ENCODE measurements at regions of chr13 and their contacts with region 1.

Region 1: DNA sequence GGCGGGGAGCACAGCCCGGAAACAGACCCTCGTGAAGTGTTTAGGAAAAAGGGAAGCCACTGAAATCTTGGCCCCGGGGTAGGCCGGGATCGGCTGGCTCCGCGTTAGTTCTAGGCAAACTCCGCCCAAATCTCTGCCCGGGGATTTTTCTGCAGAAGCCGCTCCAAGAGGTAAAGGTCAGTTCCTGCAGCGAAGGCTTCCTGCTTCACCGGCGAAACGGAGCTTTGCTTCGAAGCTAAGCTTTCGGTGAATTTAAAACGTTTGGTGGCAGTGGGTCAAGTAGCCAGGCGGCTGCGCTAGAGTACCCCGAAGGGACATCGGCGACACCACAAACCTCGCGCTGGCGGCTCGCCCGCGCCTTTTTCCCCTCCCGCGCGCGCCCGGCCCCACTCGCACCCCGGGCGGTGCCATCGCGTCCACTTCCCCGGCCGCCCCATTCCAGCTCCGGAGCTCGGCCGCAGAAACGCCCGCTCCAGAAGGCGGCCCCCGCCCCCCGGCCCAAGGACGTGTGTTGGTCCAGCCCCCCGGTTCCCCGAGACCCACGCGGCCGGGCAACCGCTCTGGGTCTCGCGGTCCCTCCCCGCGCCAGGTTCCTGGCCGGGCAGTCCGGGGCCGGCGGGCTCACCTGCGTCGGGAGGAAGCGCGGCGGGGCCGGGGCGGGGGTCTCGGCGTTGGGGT is 441 bp downstream of the GJB2 start:
- DNase-seq: peak; percentile 50
- H3K4me3 Mint-ChIP-seq: peak overlapping the region; percentile 65
- H3K27ac Mint-ChIP-seq: no peak overlapping the region
- H3K4me1 Mint-ChIP-seq: peaks cover 13% of the 10 kb centered on the region
- H3K27me3 Mint-ChIP-seq: peaks cover 45% of the 10 kb centered on the region

Region 2: DNA sequence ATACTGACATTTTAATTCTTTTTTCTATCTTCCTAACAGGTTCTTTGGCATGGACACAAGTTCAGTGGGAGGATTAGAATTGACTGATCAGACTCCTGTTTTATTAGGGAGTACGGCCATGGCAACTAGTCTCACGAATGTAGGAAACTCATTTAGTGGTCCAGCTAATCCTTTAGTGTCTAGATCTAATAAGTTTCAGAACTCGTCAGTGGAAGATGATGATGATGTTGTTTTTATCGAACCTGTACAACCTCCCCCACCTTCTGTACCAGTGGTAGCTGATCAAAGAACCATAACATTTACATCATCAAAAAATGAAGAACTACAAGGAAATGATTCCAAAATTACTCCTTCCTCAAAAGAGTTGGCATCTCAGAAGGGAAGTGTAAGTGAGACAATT is 199.3 kb before region 1 on chr13:
- CTCF ChIA-PET with region 1: no interaction called
- intact Hi-C with region 1: no loop called
- DNase-seq: no peak
- H3K4me3 Mint-ChIP-seq: no peak overlapping the region
- H3K27ac Mint-ChIP-seq: no peak overlapping the region
- H3K4me1 Mint-ChIP-seq: peaks cover 29% of the 10 kb centered on the region
- H3K27me3 Mint-ChIP-seq: no peaks in the 10 kb centered on the region

Region 3: DNA sequence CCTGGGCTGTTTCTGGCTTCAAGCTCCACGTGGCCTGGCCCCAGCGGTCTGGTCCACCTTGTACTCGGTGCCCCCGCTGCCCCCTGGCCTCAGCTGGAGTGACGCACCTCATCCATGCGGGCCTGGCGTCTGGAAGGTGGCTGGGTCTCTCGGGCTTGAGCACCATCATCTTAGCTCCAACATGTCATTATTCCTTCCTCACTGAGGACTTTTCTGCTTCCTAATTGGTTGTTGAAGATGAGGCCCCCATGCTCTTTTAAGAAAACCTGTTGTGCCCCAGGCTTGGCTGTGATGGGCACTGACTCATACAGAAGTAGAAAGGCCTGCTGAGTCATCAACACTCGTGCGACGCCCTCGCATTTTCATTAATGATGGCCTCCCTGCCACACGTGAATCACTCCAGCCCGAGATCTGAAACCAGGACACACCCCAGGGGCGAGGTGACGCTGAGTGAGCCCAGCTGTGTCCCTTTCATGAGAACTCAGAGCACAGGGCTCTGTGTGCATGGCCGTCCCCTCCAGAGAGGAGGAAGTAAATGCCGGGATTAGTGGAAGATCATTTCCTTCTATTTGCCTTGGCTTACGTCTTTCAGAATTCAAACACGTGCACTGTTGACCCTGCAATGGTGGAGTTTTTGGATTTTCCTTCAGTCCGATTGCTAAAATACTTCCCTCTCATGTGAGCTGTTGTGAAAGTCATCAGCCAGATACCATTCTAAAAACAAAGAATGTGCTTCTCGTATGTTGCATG is 17.5 kb before region 1 on chr13:
- CTCF ChIA-PET with region 1: interaction called, 9 read pairs
- intact Hi-C with region 1: loop called (anchors 1 kb)
- DNase-seq: peak; percentile 89
- H3K4me3 Mint-ChIP-seq: no peak overlapping the region
- H3K27ac Mint-ChIP-seq: no peak overlapping the region
- H3K4me1 Mint-ChIP-seq: peaks cover 21% of the 10 kb centered on the region
- H3K27me3 Mint-ChIP-seq: peaks cover 69% of the 10 kb centered on the region

Region 4: GRCh38 chr13:20311596-20311995 is 119.3 kb after region 1 on chr13:
- CTCF ChIA-PET with region 1: no interaction called
- intact Hi-C with region 1: no loop called
- DNase-seq: no peak
- H3K4me3 Mint-ChIP-seq: no peak overlapping the region
- H3K27ac Mint-ChIP-seq: no peak overlapping the region
- H3K4me1 Mint-ChIP-seq: no peaks in the 10 kb centered on the region
- H3K27me3 Mint-ChIP-seq: peaks cover 2% of the 10 kb centered on the region

Measured in activated naive CD4-positive, alpha-beta T cell treated with anti-CD3 and anti-CD28 coated beads for 36 hours (primary cell).